H1 (cell line): ENCODE measurements at regions of chr4 and their contacts with region 1.

Region 1: DNA sequence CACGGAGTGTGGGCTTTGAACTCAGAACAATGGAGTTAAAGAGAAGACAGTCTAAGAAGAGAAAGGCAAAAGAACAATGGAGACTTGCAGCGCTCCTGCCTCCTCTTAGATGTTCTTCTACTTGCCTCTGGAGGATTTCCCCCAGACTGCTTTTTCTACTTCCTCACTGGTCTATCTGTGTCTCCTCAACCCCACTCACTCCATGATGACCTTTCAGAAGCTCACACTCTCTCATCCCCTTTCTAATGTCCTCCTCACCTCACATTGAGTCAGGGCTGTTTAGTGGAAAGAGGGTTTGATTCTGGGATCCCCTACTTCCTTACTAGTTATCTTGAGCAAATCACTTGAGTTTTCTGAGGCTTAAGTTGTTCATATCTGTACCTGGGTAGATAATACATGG is 12.2 kb upstream of the HERC6 start:
- DNase-seq: peak in 1 of 2 experiments; percentile 19
- H3K4me3 ChIP-seq: no peak overlapping the region
- H3K27ac ChIP-seq: no peak overlapping the region
- H3K4me1 ChIP-seq: peaks cover 0 to 3% (median 0%) of the 10 kb centered on the region in 4 experiments; a peak in 1 of 7 replicates
- H3K27me3 ChIP-seq: peaks cover 0 to 1% (median 0%) of the 10 kb centered on the region in 4 experiments; a peak in 1 of 7 replicates
- CTCF ChIP-seq: no peak
- EP300 ChIP-seq: no peak
- POLR2A ChIP-seq: no peak
- RAD21 ChIP-seq: no peak

Region 2: DNA sequence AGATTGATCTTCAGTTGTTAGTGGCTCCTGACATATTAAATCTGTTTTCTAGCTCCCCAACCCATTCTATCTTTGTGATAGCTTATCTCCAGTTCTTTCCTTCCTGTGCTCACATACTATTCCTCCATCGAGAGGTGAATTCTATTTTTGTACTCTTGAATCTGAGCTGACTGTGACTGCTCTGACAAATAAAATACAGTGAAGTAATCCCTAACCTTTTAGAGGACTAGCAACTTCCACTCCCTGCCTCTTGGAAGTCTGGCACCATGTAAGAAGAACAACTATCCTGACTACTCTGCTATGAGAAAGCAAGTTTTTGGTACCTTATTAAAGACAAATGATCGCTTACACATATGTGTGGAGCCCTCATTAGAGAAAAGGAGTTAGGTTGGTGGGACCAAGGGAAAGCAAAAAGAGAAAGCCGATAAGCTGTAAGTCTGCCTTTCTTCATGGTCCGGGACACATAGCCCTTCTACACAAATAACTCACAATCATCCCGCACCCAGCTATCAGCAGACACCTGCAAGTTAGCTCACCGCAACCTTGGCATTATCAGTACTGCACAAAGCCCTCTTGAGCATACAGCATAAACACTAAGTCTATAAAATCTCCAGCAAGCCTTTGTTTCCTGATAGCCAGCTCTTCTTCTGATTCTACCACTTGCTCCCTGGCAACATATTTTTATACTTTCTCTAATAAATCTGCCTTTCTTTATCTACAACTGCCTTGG is 68.6 kb before region 1 on chr4:
- CTCF ChIA-PET with region 1: interaction called, 13 read pairs
- POLR2A ChIA-PET with region 1: no interaction called
- DNase-seq: no peak
- H3K4me3 ChIP-seq: no peak overlapping the region
- H3K27ac ChIP-seq: no peak overlapping the region
- H3K4me1 ChIP-seq: no peaks in the 10 kb centered on the region; a peak in 1 of 7 replicates
- H3K27me3 ChIP-seq: no peaks in the 10 kb centered on the region
- CTCF ChIP-seq: no peak
- EP300 ChIP-seq: no peak
- POLR2A ChIP-seq: no peak
- RAD21 ChIP-seq: no peak

Region 3: GRCh38 chr4:88352062-88352740 is 14.3 kb before region 1 on chr4:
- CTCF ChIA-PET with region 1: interaction called, 13 read pairs
- POLR2A ChIA-PET with region 1: no interaction called
- DNase-seq: peak in 1 of 2 experiments; percentile 8
- H3K4me3 ChIP-seq: no peak overlapping the region
- H3K27ac ChIP-seq: no peak overlapping the region
- H3K4me1 ChIP-seq: no peaks in the 10 kb centered on the region; a peak in 1 of 7 replicates
- H3K27me3 ChIP-seq: no peaks in the 10 kb centered on the region
- CTCF ChIP-seq: no peak
- EP300 ChIP-seq: no peak
- POLR2A ChIP-seq: no peak
- RAD21 ChIP-seq: no peak

Region 4: DNA sequence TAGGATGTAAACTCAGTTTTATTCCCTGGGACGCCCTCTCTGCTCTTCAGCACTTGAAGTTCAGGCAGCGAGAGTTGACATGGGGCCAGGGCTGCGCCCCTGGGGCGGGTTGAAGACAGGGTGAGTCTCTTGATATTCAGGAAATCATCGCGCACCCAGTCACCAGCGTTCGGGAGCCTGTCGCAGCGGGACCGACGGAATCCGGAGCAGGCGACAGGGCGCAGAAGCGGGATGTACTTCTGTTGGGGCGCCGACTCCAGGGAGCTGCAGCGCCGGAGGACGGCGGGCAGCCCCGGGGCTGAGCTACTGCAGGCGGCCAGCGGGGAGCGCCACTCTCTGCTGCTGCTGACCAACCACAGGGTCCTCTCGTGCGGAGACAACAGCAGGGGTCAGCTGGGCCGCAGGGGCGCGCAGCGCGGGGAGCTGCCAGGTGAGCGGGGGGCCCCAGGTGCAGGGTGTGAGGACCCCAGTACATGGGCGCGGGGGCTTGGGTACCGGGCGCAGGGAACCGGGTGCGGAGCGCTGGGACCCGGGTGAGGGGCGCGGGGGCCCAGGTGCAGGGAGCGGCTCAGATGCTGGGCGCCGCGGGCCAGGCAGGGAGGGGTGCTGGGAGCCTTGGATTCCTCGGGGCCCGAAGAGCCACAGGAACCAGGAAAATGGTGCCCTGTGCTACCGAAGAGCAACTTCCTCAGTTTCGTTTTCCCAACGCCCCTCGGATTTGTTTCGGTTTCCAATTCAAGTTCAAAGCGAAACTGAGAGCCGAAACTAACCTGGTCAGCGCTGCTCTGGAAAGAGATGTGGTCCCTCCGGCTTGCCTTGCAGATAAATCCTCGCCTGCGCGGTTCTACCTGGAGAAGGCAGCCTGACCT is 12.5 kb after region 1 on chr4 and contains the start of gene HERC6:
- CTCF ChIA-PET with region 1: interaction called, 12 read pairs
- POLR2A ChIA-PET with region 1: interaction called, 3 read pairs
- DNase-seq: peak; percentile 51 to 86
- H3K4me3 ChIP-seq: peak within 1 kb of the TSS; percentile 55 to 97 (median 68)
- H3K27ac ChIP-seq: peak within 1 kb of the TSS; percentile 37; the same call in 1 of the 2 replicates
- H3K4me1 ChIP-seq: no peaks in the 10 kb centered on the region; a peak in 1 of 7 replicates
- H3K27me3 ChIP-seq: peaks cover 0 to 8% (median 6%) of the 10 kb centered on the region in 4 experiments; a peak in 5 of 7 replicates
- CTCF ChIP-seq: peak; percentile 65 to 79 (median 72)
- EP300 ChIP-seq: peak in 1 of 2 experiments; percentile 60; a peak in 1 of 3 replicates
- POLR2A ChIP-seq: peak; percentile 67 to 69
- RAD21 ChIP-seq: peak; percentile 47 to 66
- total RNA-seq, gene HERC6: 3.8 and 4.4 TPM in 2 replicates

Region 5: DNA sequence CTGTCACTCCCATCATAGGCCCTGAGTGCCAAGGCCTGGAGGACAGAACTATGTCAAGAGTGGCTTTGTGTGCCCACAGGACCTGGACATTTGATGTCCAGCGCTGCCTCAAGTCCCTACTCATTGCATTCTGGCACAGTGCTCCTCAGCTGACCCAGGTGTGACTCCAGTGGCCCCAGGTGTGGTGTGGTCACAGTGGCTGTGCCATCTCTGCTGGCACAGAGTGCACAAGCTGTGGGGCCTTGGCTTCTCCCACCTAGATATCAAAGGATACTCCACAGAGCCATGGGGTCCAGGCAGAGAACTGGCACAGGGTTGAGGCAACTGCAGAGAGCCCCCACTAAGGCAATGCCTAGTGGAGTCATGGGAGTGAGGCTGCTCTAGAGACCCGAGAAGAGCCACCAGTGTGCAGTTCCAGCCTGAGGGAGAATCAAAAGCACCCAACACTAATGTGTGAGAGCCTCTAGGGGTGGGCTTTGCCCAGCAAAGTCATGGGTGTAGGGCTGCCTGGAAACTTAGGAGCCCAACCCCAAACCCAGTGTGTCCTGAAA is 131.5 kb after region 1 on chr4:
- CTCF ChIA-PET with region 1: no interaction called
- POLR2A ChIA-PET with region 1: no interaction called
- DNase-seq: no peak
- H3K4me3 ChIP-seq: no peak overlapping the region
- H3K27ac ChIP-seq: no peak overlapping the region
- H3K4me1 ChIP-seq: no peaks in the 10 kb centered on the region
- H3K27me3 ChIP-seq: no peaks in the 10 kb centered on the region
- CTCF ChIP-seq: no peak
- EP300 ChIP-seq: no peak
- POLR2A ChIP-seq: no peak
- RAD21 ChIP-seq: no peak

Region 6: GRCh38 chr4:88514557-88515511 is 148.4 kb after region 1 on chr4:
- CTCF ChIA-PET with region 1: interaction called, 35 read pairs
- POLR2A ChIA-PET with region 1: no interaction called
- DNase-seq: no peak
- H3K4me3 ChIP-seq: no peak overlapping the region
- H3K27ac ChIP-seq: no peak overlapping the region
- H3K4me1 ChIP-seq: peaks cover 0 to 2% (median 0%) of the 10 kb centered on the region in 4 experiments; a peak in 1 of 7 replicates
- H3K27me3 ChIP-seq: no peaks in the 10 kb centered on the region
- CTCF ChIP-seq: no peak
- EP300 ChIP-seq: no peak
- POLR2A ChIP-seq: no peak
- RAD21 ChIP-seq: no peak